Activated naive CD4-positive, alpha-beta T cell treated with anti-CD3 and anti-CD28 coated beads for 36 hours (primary cell): ENCODE measurements at regions of chr6 and their contacts with region 1.

Region 1: GRCh38 chr6:722077-722524 is 29.2 kb upstream of the EXOC2 start:
- DNase-seq: peak; percentile 85
- H3K4me3 Mint-ChIP-seq: no peak overlapping the region
- H3K27ac Mint-ChIP-seq: no peak overlapping the region
- H3K4me1 Mint-ChIP-seq: no peaks in the 10 kb centered on the region
- H3K27me3 Mint-ChIP-seq: no peaks in the 10 kb centered on the region

Region 2: DNA sequence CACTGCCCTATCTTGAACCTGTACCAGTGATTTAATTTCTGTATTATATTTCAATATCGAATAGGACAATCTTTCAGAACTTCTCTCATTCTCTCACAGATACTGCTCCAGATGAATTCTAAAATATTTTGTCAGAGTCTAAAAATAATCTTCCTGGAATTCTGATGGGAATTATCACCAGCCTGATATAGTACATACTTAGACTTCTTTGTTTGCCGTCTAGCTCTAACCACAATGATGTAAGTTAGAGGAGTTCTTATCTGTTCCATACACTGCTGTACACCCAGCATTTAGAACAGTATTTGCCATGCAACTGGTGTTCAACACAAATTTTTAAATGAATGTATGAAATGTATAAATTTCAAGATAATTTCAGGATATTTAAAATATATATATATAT is 63.9 kb before region 1 on chr6:
- CTCF ChIA-PET with region 1: no interaction called
- intact Hi-C with region 1: no loop called
- DNase-seq: no peak
- H3K4me3 Mint-ChIP-seq: no peak overlapping the region
- H3K27ac Mint-ChIP-seq: no peak overlapping the region
- H3K4me1 Mint-ChIP-seq: peaks cover 50% of the 10 kb centered on the region
- H3K27me3 Mint-ChIP-seq: no peaks in the 10 kb centered on the region

Region 3: GRCh38 chr6:701700-702479 is 20.2 kb before region 1 on chr6:
- CTCF ChIA-PET with region 1: interaction called, 11 read pairs
- intact Hi-C with region 1: no loop called
- DNase-seq: no peak
- H3K4me3 Mint-ChIP-seq: no peak overlapping the region
- H3K27ac Mint-ChIP-seq: no peak overlapping the region
- H3K4me1 Mint-ChIP-seq: no peaks in the 10 kb centered on the region
- H3K27me3 Mint-ChIP-seq: peaks cover 1% of the 10 kb centered on the region

Region 4: GRCh38 chr6:786946-787763 is 65.1 kb after region 1 on chr6:
- CTCF ChIA-PET with region 1: interaction called, 3 read pairs
- intact Hi-C with region 1: loop called (anchors 1 kb)
- DNase-seq: peak; percentile 28
- H3K4me3 Mint-ChIP-seq: no peak overlapping the region
- H3K27ac Mint-ChIP-seq: no peak overlapping the region
- H3K4me1 Mint-ChIP-seq: peaks cover 15% of the 10 kb centered on the region
- H3K27me3 Mint-ChIP-seq: peaks cover 9% of the 10 kb centered on the region

Region 5: GRCh38 chr6:1381481-1382330 is 659.6 kb after region 1 on chr6:
- CTCF ChIA-PET with region 1: no interaction called
- intact Hi-C with region 1: loop called (anchors 2 kb)
- DNase-seq: peak; percentile 63
- H3K4me3 Mint-ChIP-seq: no peak overlapping the region
- H3K27ac Mint-ChIP-seq: no peak overlapping the region
- H3K4me1 Mint-ChIP-seq: peaks cover 41% of the 10 kb centered on the region
- H3K27me3 Mint-ChIP-seq: peaks cover 74% of the 10 kb centered on the region

Region 6: GRCh38 chr6:1396952-1397868 is 675.1 kb after region 1 on chr6:
- CTCF ChIA-PET with region 1: interaction called, 3 read pairs
- intact Hi-C with region 1: loop called (anchors 5 kb)
- DNase-seq: peak; percentile 80
- H3K4me3 Mint-ChIP-seq: no peak overlapping the region
- H3K27ac Mint-ChIP-seq: no peak overlapping the region
- H3K4me1 Mint-ChIP-seq: peaks cover 10% of the 10 kb centered on the region
- H3K27me3 Mint-ChIP-seq: peaks cover 53% of the 10 kb centered on the region

Region 7: DNA sequence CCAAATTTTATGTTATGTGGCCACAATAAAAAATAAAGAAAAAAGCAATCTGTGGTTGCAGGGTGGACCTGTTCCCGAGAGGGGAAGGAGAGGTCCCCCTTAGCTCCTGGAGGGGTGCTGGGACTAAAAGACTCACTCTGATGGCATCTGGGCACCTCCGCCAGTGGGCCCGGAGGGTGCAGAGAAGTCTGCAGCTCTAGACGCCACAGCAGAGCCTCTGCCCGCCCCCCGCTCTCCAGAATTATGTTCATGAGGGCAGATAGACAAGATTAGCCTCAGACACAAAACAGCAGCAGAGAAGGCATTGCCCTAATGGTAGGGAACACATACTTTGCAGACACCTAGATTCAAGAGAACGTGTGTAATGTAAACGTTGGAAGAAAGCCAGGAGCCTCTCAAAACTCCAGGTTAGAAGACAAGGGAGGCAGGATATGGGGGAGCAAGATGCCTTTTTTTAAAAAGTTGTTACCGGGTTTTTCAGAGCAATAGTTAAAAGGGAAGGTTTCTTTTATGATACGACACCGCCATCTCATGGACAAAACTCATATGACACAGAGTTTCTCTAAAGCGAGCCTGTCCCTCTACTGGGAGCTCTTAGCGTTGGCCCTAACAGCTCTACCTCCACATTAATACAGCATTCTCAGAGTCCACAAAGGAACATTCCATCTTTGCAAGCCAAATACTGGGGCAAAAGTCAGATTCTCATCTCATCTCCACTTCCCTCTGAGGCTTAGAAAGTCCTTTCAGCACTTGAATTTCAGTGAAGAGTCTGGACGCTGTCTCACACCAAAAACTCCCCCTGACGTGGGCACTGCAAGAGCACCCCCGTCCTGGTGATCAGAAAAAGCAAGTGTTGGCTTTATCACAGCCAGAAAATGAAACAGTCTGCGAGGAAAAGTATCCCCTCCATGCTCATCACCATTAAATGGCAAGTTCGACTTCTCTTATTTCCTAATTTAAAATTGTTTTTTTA is 714.5 kb after region 1 on chr6:
- CTCF ChIA-PET with region 1: no interaction called
- intact Hi-C with region 1: loop called (anchors 2 kb)
- DNase-seq: peak; percentile 63
- H3K4me3 Mint-ChIP-seq: no peak overlapping the region
- H3K27ac Mint-ChIP-seq: no peak overlapping the region
- H3K4me1 Mint-ChIP-seq: no peaks in the 10 kb centered on the region
- H3K27me3 Mint-ChIP-seq: peaks cover 42% of the 10 kb centered on the region